ENCODE measurements at regions of chr19 and their contacts with region 1.

Region 1: GRCh38 chr19:49224856-49225255 is 67.3 kb downstream of the TRPM4 start:
- DNase-seq: peak; percentile 67
- H3K4me3 Mint-ChIP-seq: no peak overlapping the region
- H3K27ac Mint-ChIP-seq: peak overlapping the region; percentile 18
- H3K4me1 Mint-ChIP-seq: peaks cover 2% of the 10 kb centered on the region
- H3K27me3 Mint-ChIP-seq: peaks cover 11% of the 10 kb centered on the region

Region 2: GRCh38 chr19:49210108-49210900 is 14.6 kb before region 1 on chr19:
- CTCF ChIA-PET with region 1: interaction called, 16 read pairs
- POLR2A ChIA-PET with region 1: no interaction called
- intact Hi-C with region 1: no loop called
- DNase-seq: peak; percentile 57
- H3K4me3 Mint-ChIP-seq: no peak overlapping the region
- H3K27ac Mint-ChIP-seq: no peak overlapping the region
- H3K4me1 Mint-ChIP-seq: peaks cover 5% of the 10 kb centered on the region
- H3K27me3 Mint-ChIP-seq: peaks cover 3% of the 10 kb centered on the region

Region 3: GRCh38 chr19:49272184-49272583 is 47.3 kb after region 1 on chr19:
- CTCF ChIA-PET with region 1: no interaction called
- POLR2A ChIA-PET with region 1: no interaction called
- intact Hi-C with region 1: loop called (anchors 5 kb)
- DNase-seq: no peak
- H3K4me3 Mint-ChIP-seq: no peak overlapping the region
- H3K27ac Mint-ChIP-seq: no peak overlapping the region
- H3K4me1 Mint-ChIP-seq: peaks cover 12% of the 10 kb centered on the region
- H3K27me3 Mint-ChIP-seq: peaks cover 11% of the 10 kb centered on the region

Region 4: GRCh38 chr19:49282184-49282583 is 57.3 kb after region 1 on chr19:
- CTCF ChIA-PET with region 1: no interaction called
- POLR2A ChIA-PET with region 1: no interaction called
- intact Hi-C with region 1: no loop called
- DNase-seq: no peak
- H3K4me3 Mint-ChIP-seq: no peak overlapping the region
- H3K27ac Mint-ChIP-seq: no peak overlapping the region
- H3K4me1 Mint-ChIP-seq: no peaks in the 10 kb centered on the region
- H3K27me3 Mint-ChIP-seq: peaks cover 8% of the 10 kb centered on the region

Region 5: GRCh38 chr19:49309087-49309486 is 84.2 kb after region 1 on chr19:
- CTCF ChIA-PET with region 1: no interaction called
- POLR2A ChIA-PET with region 1: no interaction called
- intact Hi-C with region 1: no loop called
- DNase-seq: no peak
- H3K4me3 Mint-ChIP-seq: no peak overlapping the region
- H3K27ac Mint-ChIP-seq: no peak overlapping the region
- H3K4me1 Mint-ChIP-seq: no peaks in the 10 kb centered on the region
- H3K27me3 Mint-ChIP-seq: no peaks in the 10 kb centered on the region

Region 6: GRCh38 chr19:49331616-49332055 is 106.8 kb after region 1 on chr19:
- CTCF ChIA-PET with region 1: interaction called, 5 read pairs
- POLR2A ChIA-PET with region 1: no interaction called
- intact Hi-C with region 1: loop called (anchors 1 kb)
- DNase-seq: peak; percentile 80
- H3K4me3 Mint-ChIP-seq: peak overlapping the region; percentile 43
- H3K27ac Mint-ChIP-seq: peak overlapping the region; percentile 99
- H3K4me1 Mint-ChIP-seq: peaks cover 69% of the 10 kb centered on the region
- H3K27me3 Mint-ChIP-seq: no peaks in the 10 kb centered on the region

Region 7: DNA sequence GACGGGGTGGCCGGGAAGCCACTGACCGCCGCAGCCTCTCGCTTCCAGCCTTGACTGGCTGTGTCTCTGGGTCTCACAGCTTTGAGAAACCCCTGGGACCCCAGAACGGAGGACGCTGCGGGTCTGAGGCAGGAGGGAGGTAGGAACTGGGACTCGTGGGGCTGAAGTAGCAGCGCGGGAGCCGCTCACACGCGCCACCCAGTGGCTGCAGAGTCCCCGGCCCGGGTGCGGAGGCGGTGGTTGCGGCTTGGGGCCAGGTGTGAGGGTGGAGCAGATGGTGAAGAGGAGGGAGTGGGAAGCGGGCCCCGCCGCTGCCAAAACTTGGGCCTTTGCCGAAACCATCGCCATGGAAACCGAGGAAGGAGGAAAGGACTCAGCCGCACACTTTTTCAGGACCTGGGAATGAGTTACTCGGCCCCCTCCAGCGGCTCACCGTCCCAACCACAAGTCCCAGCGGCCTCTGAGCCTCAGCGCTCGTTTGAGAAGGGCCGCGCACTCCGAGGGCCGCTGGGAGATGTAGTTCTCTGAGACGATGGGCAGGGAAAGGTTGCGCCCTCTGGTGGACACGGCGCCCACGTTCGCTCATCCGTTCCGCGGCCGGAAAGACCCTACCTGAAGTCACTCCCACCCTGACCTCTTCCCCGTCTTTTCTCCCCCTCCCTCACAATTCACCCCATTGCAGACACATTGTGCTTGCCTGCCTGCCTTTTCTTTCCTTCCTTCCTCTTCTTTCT is 218.7 kb after region 1 on chr19:
- CTCF ChIA-PET with region 1: no interaction called
- POLR2A ChIA-PET with region 1: no interaction called
- intact Hi-C with region 1: loop called (anchors 1 kb)
- DNase-seq: peak; percentile 96
- H3K4me3 Mint-ChIP-seq: peak overlapping the region; percentile 74
- H3K27ac Mint-ChIP-seq: peak overlapping the region; percentile 82
- H3K4me1 Mint-ChIP-seq: peaks cover 33% of the 10 kb centered on the region
- H3K27me3 Mint-ChIP-seq: peaks cover 36% of the 10 kb centered on the region

Measured in activated CD4-positive, alpha-beta memory T cell treated with anti-CD3 and anti-CD28 coated beads for 36 hours (primary cell).